ENCODE measurements at regions of chr6 and their contacts with region 1.

Region 1: GRCh38 chr6:3005874-3006273 is 6.2 kb downstream of the NQO2 start:
- DNase-seq: no peak
- ATAC-seq: no peak
- H3K4me3 ChIP-seq: no peak overlapping the region
- H3K4me3 Mint-ChIP-seq: no peak overlapping the region
- H3K27ac ChIP-seq: no peak overlapping the region
- H3K27ac Mint-ChIP-seq: no peak overlapping the region
- H3K4me1 ChIP-seq: peaks cover 13% of the 10 kb centered on the region
- H3K4me1 Mint-ChIP-seq: peaks cover 20% of the 10 kb centered on the region
- H3K27me3 ChIP-seq: no peaks in the 10 kb centered on the region
- H3K27me3 Mint-ChIP-seq: no peaks in the 10 kb centered on the region
- CTCF ChIP-seq: no peak

Region 2: DNA sequence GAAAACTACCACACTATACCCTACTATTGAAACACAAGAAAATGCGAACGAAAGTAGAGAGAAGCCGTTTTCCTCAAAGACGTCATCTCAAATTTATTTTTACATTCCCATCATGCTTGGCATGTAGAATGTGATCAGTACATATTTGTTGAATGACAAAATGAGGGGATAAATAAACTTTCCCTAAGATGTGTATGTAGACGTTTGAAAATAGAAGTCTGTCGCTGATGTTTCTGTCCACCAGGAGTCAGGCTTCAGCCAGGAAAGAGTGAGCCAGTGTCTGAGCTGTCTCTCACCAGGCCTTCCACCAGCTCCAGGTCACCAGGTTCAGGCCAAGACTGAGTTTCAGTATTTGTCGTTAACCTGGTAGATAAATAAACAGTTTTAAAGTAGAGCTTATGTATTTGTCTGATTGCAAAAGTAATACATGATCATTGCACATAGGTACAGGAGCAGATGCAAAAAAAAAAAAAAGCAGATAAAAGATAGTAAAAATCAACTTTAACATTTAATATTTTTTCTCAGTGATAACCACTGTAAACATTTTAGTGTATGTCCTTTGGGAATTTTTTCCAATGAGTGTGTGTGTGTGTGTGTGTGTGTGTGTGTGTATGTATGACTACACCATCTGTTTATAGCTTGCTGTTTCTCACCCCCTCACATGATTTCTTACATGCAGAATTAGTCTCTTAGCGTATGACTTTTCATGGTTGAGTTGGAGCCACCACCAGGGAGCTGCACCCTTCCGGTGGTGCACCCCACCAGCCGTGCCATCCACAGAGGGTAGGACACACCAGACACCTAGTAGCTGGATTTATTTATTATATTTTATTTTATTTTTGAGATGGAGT is 214.5 kb before region 1 on chr6:
- CTCF ChIA-PET with region 1: no interaction called
- POLR2A ChIA-PET with region 1: no interaction called
- intact Hi-C with region 1: no loop called
- DNase-seq: peak; percentile 22 to 76 (median 42)
- ATAC-seq: peak; percentile 86
- H3K4me3 ChIP-seq: no peak overlapping the region
- H3K4me3 Mint-ChIP-seq: peak overlapping the region; percentile 49
- H3K27ac ChIP-seq: no peak overlapping the region
- H3K27ac Mint-ChIP-seq: peak overlapping the region; percentile 70
- H3K4me1 ChIP-seq: peaks cover 22% of the 10 kb centered on the region
- H3K4me1 Mint-ChIP-seq: peaks cover 37% of the 10 kb centered on the region
- H3K27me3 ChIP-seq: no peaks in the 10 kb centered on the region
- H3K27me3 Mint-ChIP-seq: no peaks in the 10 kb centered on the region
- CTCF ChIP-seq: peak; percentile 68

Region 3: DNA sequence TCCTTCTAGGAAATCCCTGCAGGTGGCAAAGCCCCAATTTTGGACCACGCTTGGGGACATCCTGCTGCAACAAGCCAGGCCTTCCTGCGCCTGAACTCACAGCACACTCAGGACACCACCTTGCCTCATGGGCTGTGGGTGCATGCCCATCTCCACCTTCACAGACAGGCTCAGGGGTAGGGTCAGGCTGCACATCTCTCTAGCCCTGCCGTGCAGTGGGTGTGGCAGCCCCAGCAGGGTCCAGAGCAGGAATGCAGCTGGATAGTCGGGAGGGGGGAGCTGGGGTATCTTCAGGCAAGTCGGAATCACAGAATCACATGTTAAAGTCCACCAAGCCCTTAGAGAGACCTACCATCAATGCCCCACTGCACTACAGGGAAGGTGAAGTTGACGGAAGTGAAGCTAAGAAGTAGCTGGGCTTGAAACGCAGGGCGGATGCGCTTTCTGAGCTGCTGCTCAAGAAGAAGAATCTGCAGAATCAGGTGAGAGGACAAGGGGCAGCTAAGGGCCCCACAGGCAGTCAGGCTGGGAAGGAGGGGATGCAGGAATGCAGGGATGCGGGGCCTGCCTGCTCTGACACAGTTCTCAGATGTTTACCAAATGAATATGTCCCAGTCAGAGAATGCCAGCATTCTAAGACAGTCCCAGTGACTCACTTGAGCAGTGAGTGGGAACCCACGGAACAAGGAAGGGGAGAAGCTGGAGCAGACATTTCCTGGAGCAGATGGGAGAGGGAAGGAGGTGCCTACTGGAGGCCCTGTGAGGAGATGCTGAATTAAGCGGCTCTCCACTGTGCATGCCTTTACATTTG is 45.8 kb before region 1 on chr6:
- CTCF ChIA-PET with region 1: no interaction called
- POLR2A ChIA-PET with region 1: no interaction called
- intact Hi-C with region 1: no loop called
- DNase-seq: no peak
- ATAC-seq: no peak
- H3K4me3 ChIP-seq: no peak overlapping the region
- H3K4me3 Mint-ChIP-seq: no peak overlapping the region
- H3K27ac ChIP-seq: no peak overlapping the region
- H3K27ac Mint-ChIP-seq: no peak overlapping the region
- H3K4me1 ChIP-seq: peaks cover 8% of the 10 kb centered on the region
- H3K4me1 Mint-ChIP-seq: peaks cover 9% of the 10 kb centered on the region
- H3K27me3 ChIP-seq: no peaks in the 10 kb centered on the region
- H3K27me3 Mint-ChIP-seq: no peaks in the 10 kb centered on the region
- CTCF ChIP-seq: no peak

Region 4: DNA sequence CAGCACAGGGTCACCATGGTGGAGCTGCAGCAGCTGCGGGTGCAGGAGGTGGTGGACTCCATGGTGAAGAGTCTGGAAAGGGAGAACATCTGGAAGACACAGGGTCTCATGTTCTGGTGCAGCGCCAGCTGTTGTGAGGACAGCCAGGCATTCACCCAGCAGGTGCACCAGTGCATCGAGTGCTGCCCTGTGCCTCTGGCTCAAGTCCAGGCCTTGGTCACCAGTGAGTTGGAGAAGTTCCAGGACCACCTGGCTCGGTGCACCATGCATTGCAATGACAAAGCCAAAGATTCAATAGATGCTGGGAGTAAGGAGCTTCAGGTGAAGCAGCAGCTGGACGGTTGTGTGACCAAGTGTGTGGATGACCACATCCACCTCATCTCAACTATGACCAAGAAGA is 39.5 kb after region 1 on chr6:
- CTCF ChIA-PET with region 1: interaction called, 3 read pairs
- POLR2A ChIA-PET with region 1: no interaction called
- intact Hi-C with region 1: loop called in 1 of 2 experiments (anchors 2 kb)
- DNase-seq: no peak
- ATAC-seq: no peak
- H3K4me3 ChIP-seq: no peak overlapping the region
- H3K4me3 Mint-ChIP-seq: no peak overlapping the region
- H3K27ac ChIP-seq: no peak overlapping the region
- H3K27ac Mint-ChIP-seq: no peak overlapping the region
- H3K4me1 ChIP-seq: no peaks in the 10 kb centered on the region
- H3K4me1 Mint-ChIP-seq: no peaks in the 10 kb centered on the region
- H3K27me3 ChIP-seq: no peaks in the 10 kb centered on the region
- H3K27me3 Mint-ChIP-seq: no peaks in the 10 kb centered on the region
- CTCF ChIP-seq: no peak